ENCODE measurements at regions of chr3 and their contacts with region 1.

Region 1: DNA sequence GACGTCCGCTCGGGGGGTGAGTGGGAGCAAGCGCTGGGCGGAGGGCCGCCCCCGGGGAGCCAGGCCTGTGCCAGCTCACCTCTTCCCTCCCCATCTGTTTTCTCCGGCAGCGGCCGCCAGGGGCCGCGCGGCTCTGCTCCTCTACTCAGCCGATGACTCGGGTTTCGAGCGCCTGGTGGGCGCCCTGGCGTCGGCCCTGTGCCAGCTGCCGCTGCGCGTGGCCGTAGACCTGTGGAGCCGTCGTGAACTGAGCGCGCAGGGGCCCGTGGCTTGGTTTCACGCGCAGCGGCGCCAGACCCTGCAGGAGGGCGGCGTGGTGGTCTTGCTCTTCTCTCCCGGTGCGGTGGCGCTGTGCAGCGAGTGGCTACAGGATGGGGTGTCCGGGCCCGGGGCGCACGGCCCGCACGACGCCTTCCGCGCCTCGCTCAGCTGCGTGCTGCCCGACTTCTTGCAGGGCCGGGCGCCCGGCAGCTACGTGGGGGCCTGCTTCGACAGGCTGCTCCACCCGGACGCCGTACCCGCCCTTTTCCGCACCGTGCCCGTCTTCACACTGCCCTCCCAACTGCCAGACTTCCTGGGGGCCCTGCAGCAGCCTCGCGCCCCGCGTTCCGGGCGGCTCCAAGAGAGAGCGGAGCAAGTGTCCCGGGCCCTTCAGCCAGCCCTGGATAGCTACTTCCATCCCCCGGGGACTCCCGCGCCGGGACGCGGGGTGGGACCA is 632 bp upstream of the CRELD1 start:
- DNase-seq: peak; percentile 90 to 94 (median 94)
- H3K4me3 ChIP-seq: peak overlapping the region; percentile 19 to 87 (median 76)
- H3K27ac ChIP-seq: peak overlapping the region; percentile 98 to 99
- H3K4me1 ChIP-seq: peaks cover 5 to 31% (median 26%) of the 10 kb centered on the region in 4 experiments
- H3K27me3 ChIP-seq: no peaks in the 10 kb centered on the region

Region 2: DNA sequence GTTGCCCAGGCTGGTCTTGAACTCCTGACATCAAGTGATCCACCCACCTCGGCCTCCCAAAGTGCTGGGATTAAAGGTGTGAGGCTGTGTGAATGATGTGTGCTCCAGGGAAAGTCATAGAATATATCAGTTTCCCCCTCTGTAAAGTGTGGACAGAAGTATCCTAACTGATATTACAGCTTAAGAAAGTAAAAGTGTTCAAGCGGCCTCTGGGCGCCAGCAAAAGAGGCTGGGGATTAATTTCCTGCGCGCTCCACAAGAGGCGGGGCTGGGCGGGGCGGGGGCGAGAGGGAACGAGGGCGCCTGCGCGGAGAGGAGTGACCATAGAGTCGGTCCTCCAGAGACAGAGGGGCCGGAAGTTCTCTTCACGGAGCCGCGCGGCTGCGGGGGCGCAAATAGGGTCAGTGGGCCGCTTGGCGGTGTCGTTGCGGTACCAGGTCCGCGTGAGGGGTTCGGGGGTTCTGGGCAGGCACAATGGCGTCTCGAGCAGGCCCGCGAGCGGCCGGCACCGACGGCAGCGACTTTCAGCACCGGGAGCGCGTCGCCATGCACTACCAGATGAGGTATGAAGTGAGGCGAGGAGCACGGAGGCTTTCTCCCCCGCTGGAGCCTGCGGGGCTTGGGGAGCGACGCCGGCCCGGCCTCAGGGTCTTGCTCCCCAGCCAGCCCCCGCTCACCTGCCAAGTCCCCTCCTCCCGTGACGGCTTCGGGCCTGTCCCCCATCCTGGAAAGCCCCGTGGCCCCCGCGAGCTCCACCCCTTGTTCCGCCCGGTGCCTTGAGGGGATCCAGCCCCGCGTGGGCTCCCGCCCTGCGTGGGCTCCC is 42.5 kb before region 1 on chr3 and contains the start of gene JAGN1:
- CTCF ChIA-PET with region 1: interaction called, 11 read pairs
- POLR2A ChIA-PET with region 1: interaction called, 8 read pairs
- DNase-seq: peak; percentile 91 to 93 (median 93)
- H3K4me3 ChIP-seq: peak within 1 kb of the TSS; percentile 69 to 99 (median 92)
- H3K27ac ChIP-seq: peak within 1 kb of the TSS; percentile 97
- H3K4me1 ChIP-seq: peaks cover 17 to 38% (median 30%) of the 10 kb centered on the region in 4 experiments
- H3K27me3 ChIP-seq: no peaks in the 10 kb centered on the region

Region 3: GRCh38 chr3:9915254-9916141 is 17.5 kb before region 1 on chr3:
- CTCF ChIA-PET with region 1: interaction called, 22 read pairs
- POLR2A ChIA-PET with region 1: interaction called, 7 read pairs
- DNase-seq: peak in 2 of 3 donors; percentile 47 to 63
- H3K4me3 ChIP-seq: peak overlapping the region; percentile 36 to 83 (median 68)
- H3K27ac ChIP-seq: no peak overlapping the region
- H3K4me1 ChIP-seq: peaks cover 4 to 57% (median 55%) of the 10 kb centered on the region in 4 experiments
- H3K27me3 ChIP-seq: no peaks in the 10 kb centered on the region

Region 4: DNA sequence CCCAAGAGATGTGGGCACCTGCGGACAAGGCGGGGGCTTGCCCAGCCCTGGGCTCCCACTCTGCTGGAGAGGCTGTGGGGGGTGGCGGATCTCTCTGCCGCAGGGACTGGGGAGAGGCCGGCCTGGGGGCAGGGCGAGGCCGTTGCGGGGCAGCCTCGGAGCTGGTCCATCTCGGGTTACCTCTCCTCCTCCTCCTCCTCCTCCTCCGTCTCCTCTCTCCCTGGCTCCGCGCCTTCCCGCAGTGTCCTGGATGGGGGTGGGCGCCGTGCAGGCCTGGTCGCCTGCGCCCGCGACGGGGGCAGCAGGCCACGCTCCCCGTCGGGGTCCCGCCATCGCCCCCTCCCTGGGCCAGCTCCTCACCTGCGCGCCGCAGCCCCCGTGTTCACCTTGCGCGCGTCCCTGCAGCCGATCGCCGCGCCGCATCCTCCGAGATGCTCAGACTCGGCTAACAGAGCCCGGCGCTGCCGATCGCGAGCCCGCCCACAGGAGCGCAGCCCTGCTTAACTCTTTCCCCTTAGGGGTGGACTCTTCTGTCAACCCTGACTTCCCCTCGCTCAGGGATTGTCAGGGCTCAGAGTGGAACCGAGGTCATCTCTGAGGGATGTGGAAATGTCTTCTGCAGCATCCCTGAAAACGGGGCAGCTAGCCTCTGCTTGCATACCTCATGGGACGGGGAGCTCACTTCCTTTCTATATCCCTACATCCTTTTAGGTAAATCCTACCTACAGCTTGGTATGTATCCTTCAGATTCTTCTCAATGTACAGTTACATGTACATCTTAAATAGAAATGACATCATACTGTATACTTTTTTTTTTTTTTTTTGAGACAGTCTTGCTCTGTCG is 19.2 kb after region 1 on chr3 and contains the start of gene PRRT3:
- CTCF ChIA-PET with region 1: interaction called, 19 read pairs
- POLR2A ChIA-PET with region 1: interaction called, 21 read pairs
- DNase-seq: peak; percentile 43 to 80 (median 71)
- H3K4me3 ChIP-seq: peak within 1 kb of the TSS; percentile 58 to 92 (median 80)
- H3K27ac ChIP-seq: peak within 1 kb of the TSS in 1 of 2 experiments; percentile 51
- H3K4me1 ChIP-seq: peaks cover 4 to 24% (median 21%) of the 10 kb centered on the region in 4 experiments
- H3K27me3 ChIP-seq: no peaks in the 10 kb centered on the region

Region 5: DNA sequence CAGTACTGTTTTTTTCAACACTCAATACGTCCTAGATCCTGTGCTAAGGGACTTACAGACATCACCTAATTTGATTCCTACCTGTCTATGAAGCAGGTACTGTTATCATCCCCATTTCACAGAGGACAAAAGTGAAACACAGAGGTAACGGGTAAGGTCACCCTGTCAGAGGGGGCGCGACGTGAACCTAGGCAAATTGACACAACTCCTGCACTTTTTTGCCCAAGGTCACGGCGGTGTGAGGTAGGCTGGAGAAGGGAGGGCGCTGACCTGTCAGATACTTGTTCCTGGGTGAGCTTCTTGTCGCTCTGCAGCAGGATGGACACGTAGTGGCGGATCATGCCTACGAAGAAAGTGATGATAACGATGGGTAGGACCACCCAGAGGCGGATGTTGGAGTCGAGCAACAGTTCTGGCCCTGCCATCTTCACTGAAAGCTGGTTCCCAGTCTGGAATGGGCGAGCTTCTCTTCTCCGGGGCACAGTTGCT is 53.3 kb after region 1 on chr3:
- CTCF ChIA-PET with region 1: interaction called, 6 read pairs
- POLR2A ChIA-PET with region 1: interaction called, 14 read pairs
- DNase-seq: no peak
- H3K4me3 ChIP-seq: peak overlapping the region; percentile 87 to 99 (median 95)
- H3K27ac ChIP-seq: peak overlapping the region; percentile 82 to 90
- H3K4me1 ChIP-seq: peaks cover 10 to 27% (median 23%) of the 10 kb centered on the region in 4 experiments
- H3K27me3 ChIP-seq: no peaks in the 10 kb centered on the region

Region 6: GRCh38 chr3:10867384-10867783 is 934.4 kb after region 1 on chr3:
- CTCF ChIA-PET with region 1: no interaction called
- POLR2A ChIA-PET with region 1: no interaction called
- DNase-seq: peak in 2 of 3 donors; percentile 45 to 56
- H3K4me3 ChIP-seq: no peak overlapping the region
- H3K27ac ChIP-seq: no peak overlapping the region
- H3K4me1 ChIP-seq: no peaks in the 10 kb centered on the region
- H3K27me3 ChIP-seq: peaks cover 0 to 1% (median 0%) of the 10 kb centered on the region in 5 experiments

Measured in common myeloid progenitor, CD34-positive (primary cell).